Activated T-helper 2 cell treated with anti-CD3 and anti-CD28 coated beads, Interferon-gamma antibody, Interleukin-2, Interleukin-4, amounts not matched to agents 10 μg/mL and 5 μg/mL and 100 μg/mL, durations not matched to agents 14 hours and 24 hours and 36 hours (primary cell): ENCODE measurements at regions of chr1 and their contacts with region 1.

Region 1: GRCh38 chr1:109790735-109791494 is 27.2 kb upstream of the EPS8L3 start:
- DNase-seq: peak; percentile 80
- H3K4me3 Mint-ChIP-seq: peak overlapping the region; percentile 45
- H3K27ac Mint-ChIP-seq: peak overlapping the region; percentile 97
- H3K4me1 Mint-ChIP-seq: peaks cover 75% of the 10 kb centered on the region
- H3K27me3 Mint-ChIP-seq: no peaks in the 10 kb centered on the region

Region 2: DNA sequence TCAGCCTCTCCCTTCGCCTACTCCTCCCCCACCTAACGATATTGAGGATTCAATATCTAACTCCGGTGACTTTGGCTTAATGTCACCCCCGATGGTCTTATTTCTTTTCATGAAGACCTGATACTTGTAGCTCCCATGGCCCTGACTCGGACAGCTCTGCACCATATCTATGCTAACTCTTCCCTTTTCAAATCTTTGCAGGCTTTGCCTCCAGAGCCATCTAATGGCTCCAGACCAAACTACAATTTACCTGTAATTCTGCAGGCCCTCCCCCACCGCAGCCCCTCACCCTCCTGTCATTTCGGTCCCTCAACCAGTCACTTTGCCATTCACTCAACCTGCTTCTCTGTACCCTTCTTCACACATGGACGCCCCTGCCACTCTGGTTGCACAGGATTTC is 86.7 kb before region 1 on chr1:
- intact Hi-C with region 1: no loop called
- DNase-seq: no peak
- H3K4me3 Mint-ChIP-seq: no peak overlapping the region
- H3K27ac Mint-ChIP-seq: no peak overlapping the region
- H3K4me1 Mint-ChIP-seq: no peaks in the 10 kb centered on the region
- H3K27me3 Mint-ChIP-seq: no peaks in the 10 kb centered on the region

Region 3: GRCh38 chr1:109802901-109803561 is 12.1 kb after region 1 on chr1:
- intact Hi-C with region 1: loop called (anchors 1 kb)
- DNase-seq: no peak
- H3K4me3 Mint-ChIP-seq: peak overlapping the region; percentile 77
- H3K27ac Mint-ChIP-seq: peak overlapping the region; percentile 98
- H3K4me1 Mint-ChIP-seq: peaks cover 76% of the 10 kb centered on the region
- H3K27me3 Mint-ChIP-seq: no peaks in the 10 kb centered on the region

Region 4: GRCh38 chr1:109823543-109824348 is 32.8 kb after region 1 on chr1:
- intact Hi-C with region 1: loop called (anchors 5 kb)
- DNase-seq: no peak
- H3K4me3 Mint-ChIP-seq: no peak overlapping the region
- H3K27ac Mint-ChIP-seq: peak overlapping the region; percentile 84
- H3K4me1 Mint-ChIP-seq: peaks cover 67% of the 10 kb centered on the region
- H3K27me3 Mint-ChIP-seq: no peaks in the 10 kb centered on the region

Region 5: DNA sequence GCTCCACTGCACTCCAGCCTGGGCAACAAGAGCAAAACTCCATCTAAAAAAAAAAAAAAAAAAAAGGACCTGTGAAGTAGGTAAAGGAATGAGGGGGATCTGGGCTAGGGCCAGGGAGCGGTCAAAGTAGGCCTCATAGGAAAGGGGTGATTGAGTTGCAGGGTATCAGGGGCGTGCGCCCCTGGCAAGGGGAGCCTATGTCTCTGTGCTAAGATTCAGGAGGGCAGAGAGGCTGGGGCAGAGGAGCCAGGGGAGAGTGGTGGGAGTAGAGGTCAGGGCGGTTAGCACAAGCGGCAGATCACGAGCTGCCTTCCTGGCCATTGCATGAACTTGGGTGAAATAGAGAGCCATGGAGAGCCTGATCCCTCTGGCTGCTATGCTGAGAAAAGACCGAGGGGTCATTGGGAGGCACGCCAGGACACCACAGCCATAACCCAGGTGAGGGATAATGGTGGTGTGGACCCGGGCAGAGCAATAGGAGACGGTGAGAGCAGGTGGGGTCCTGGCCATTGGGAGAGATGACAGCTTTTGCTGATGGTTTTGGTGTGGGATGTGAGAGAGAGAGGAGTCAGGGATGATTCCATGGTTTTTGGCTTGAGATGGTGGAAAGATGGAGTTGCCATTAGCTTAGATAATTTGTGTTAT is 89.1 kb after region 1 on chr1:
- intact Hi-C with region 1: no loop called
- DNase-seq: no peak
- H3K4me3 Mint-ChIP-seq: no peak overlapping the region
- H3K27ac Mint-ChIP-seq: no peak overlapping the region
- H3K4me1 Mint-ChIP-seq: peaks cover 18% of the 10 kb centered on the region
- H3K27me3 Mint-ChIP-seq: peaks cover 3% of the 10 kb centered on the region

Region 6: DNA sequence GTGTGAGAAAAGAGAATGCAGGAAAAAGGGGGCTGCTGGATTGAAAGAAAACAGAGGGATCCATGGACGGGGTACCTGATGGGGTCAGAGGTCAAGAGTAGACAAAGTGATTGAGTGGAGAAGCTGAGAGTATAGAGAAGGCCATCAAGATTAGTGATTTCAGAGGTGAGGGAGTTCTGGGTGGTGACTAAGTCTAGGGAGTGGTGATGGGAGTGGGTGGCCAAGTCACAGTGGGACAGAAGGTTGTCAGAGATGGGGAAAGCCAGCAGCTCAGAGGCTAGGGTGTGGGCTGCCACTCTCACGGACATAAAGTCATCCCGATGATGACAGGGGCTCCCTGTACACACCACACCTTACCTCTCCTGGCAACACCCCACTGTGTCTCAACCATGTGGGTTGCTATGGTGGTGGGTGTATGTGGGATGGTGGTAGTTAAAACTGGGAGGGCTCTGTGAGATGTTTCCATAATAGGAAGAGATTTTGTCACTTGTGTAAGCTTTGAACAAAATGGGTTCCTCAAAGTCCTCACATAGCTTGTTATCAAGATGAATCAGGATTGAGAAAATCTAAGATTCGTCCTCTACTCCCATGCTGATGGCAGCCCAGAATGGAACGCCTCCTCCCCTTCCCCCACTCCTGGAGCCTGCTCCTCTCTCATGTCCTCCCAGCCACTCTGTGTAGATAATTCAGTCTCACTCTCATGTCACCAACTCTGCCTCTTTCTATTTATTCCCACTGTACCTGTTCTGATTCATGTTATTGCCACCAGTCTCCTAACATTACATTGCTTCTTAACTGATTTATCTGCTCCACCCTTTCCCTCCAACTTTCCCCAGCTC is 99.4 kb after region 1 on chr1:
- intact Hi-C with region 1: loop called (anchors 1 kb)
- DNase-seq: no peak
- H3K4me3 Mint-ChIP-seq: peak overlapping the region; percentile 18
- H3K27ac Mint-ChIP-seq: peak overlapping the region; percentile 94
- H3K4me1 Mint-ChIP-seq: peaks cover 39% of the 10 kb centered on the region
- H3K27me3 Mint-ChIP-seq: no peaks in the 10 kb centered on the region

Region 7: GRCh38 chr1:109984456-109985275 is 193.8 kb after region 1 on chr1 and contains the start of gene AHCYL1:
- intact Hi-C with region 1: loop called (anchors 1 kb)
- DNase-seq: peak; percentile 99
- H3K4me3 Mint-ChIP-seq: peak within 1 kb of the TSS; percentile 97
- H3K27ac Mint-ChIP-seq: peak within 1 kb of the TSS; percentile 97
- H3K4me1 Mint-ChIP-seq: peaks cover 42% of the 10 kb centered on the region
- H3K27me3 Mint-ChIP-seq: no peaks in the 10 kb centered on the region
- total RNA-seq, gene AHCYL1: 85.8 and 86.5 TPM in 2 replicates